ENCODE measurements at regions of chr6 and their contacts with region 1.

Region 1: DNA sequence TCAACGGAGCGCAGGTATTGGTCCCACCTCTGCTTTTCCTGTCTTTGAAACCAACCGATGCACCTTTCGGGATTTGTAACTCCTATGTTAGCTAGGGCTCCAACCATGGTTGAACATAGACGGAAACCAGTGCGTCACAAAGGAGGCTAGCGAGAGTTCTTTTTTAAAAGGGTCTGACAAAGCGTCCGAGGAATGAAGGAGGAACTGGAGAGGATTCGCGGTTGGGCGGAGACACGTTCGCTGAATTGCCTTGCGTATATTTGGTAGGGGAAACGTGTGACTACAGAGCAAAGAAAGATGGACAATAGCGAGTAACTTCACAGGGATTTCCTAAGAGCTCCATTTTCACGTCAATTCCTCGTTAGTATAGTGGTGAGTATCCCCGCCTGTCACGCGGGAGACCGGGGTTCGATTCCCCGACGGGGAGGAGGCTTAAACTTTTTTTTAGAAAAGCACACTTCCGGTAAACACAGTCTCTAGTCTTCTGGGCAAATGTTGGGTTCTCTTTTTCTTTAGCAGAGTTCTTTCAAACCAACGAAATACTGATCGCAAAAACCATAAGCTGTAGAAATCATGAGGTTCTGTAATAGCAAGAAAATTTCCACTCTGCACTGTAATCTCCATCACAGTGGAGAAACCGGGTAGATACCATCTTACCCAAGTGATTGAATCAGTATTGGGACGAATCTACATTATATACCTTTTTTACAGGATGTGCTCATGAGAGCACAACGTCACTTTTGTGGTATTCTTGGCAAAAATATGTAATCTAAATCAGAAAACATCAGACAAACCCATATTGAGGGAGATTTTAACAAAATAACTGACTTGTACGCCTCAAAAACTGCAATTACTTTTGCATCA is 6.6 kb upstream of the ZNF184 start:
- DNase-seq: peak; percentile 62 to 87
- H3K4me3 ChIP-seq: peak overlapping the region; percentile 52
- H3K4me3 Mint-ChIP-seq: no peak overlapping the region
- H3K27ac Mint-ChIP-seq: no peak overlapping the region
- H3K4me1 ChIP-seq: no peaks in the 10 kb centered on the region
- H3K4me1 Mint-ChIP-seq: no peaks in the 10 kb centered on the region
- H3K27me3 ChIP-seq: no peaks in the 10 kb centered on the region
- H3K27me3 Mint-ChIP-seq: no peaks in the 10 kb centered on the region
- CTCF ChIP-seq: no peak

Region 2: GRCh38 chr6:27503436-27504030 is 24.0 kb after region 1 on chr6:
- CTCF ChIA-PET with region 1: no interaction called
- POLR2A ChIA-PET with region 1: no interaction called
- intact Hi-C with region 1: loop called (anchors 2 kb)
- DNase-seq: peak; percentile 69 to 83
- H3K4me3 ChIP-seq: peak overlapping the region; percentile 56
- H3K4me3 Mint-ChIP-seq: peak overlapping the region; percentile 86
- H3K27ac Mint-ChIP-seq: peak overlapping the region; percentile 88
- H3K4me1 ChIP-seq: no peaks in the 10 kb centered on the region
- H3K4me1 Mint-ChIP-seq: peaks cover 31% of the 10 kb centered on the region
- H3K27me3 ChIP-seq: no peaks in the 10 kb centered on the region
- H3K27me3 Mint-ChIP-seq: peaks cover 3% of the 10 kb centered on the region
- CTCF ChIP-seq: no peak

Region 3: DNA sequence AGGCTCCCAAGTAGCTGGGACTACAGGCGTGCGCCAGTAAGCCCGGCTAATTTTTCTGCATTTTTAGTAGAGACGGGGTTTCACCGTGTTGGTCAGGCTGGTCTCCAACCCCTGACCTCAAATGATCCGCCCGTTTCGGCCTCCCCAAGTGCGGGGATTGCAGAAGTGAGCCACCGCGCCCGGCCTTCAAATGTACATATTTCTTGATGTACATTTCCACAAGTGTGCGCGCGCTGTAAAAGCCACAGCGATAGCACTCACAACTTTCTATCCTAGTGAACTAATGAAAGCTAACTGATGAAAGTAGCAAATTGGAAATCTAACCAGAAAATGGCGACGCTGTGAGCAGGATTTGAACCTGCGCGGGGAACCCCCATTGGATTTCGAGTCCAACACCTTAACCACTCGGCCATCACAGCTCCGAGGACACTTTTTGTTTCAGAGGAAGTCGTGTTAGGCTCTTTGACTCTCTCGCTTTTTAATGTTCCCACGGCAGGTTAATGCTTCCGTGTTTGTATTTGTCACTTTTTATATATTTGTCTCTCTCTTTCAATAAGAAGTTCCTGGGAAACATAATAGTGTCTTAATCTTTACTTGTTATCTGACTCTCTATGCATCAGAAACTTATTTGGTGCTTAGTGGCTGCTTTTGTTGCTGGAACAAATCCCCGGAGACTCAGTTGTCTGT is 192.7 kb after region 1 on chr6:
- CTCF ChIA-PET with region 1: no interaction called
- POLR2A ChIA-PET with region 1: no interaction called
- intact Hi-C with region 1: loop called (anchors 5 kb)
- DNase-seq: peak; percentile 79 to 87
- H3K4me3 ChIP-seq: peak overlapping the region; percentile 18
- H3K4me3 Mint-ChIP-seq: peak overlapping the region; percentile 75
- H3K27ac Mint-ChIP-seq: peak overlapping the region; percentile 46
- H3K4me1 ChIP-seq: peaks cover 4% of the 10 kb centered on the region; the same call in 1 of the 2 replicates
- H3K4me1 Mint-ChIP-seq: peaks cover 30% of the 10 kb centered on the region
- H3K27me3 ChIP-seq: no peaks in the 10 kb centered on the region
- H3K27me3 Mint-ChIP-seq: no peaks in the 10 kb centered on the region
- CTCF ChIP-seq: no peak

Measured in Caco-2 (cell line).